Ascending aorta (tissue), 2 donors: ENCODE measurements at regions of chr14 and their contacts with region 1.

Region 1: GRCh38 chr14:55270832-55271565 is at the start of gene FBXO34:
- DNase-seq: peak; percentile 95 to 100
- H3K4me3 ChIP-seq: peak within 1 kb of the TSS; percentile 89 to 90
- H3K27ac ChIP-seq: peak within 1 kb of the TSS; percentile 80 to 90
- H3K4me1 ChIP-seq: peaks cover 0 to 20% of the 10 kb centered on the region in 2 donors
- H3K27me3 ChIP-seq: no peaks in the 10 kb centered on the region
- CTCF ChIP-seq: peak; percentile 99
- total RNA-seq, gene FBXO34: 18.0 TPM

Region 2: GRCh38 chr14:55191203-55192053 is 79.6 kb before region 1 on chr14 and contains the start of gene DLGAP5:
- intact Hi-C with region 1: loop called (anchors 5 kb)
- DNase-seq: peak; percentile 83 to 96
- H3K4me3 ChIP-seq: peak within 1 kb of the TSS; percentile 51 to 74
- H3K27ac ChIP-seq: peak within 1 kb of the TSS; percentile 17 to 71
- H3K4me1 ChIP-seq: peaks cover 0 to 7% of the 10 kb centered on the region in 2 donors
- H3K27me3 ChIP-seq: no peaks in the 10 kb centered on the region
- CTCF ChIP-seq: no peak
- total RNA-seq, gene DLGAP5: not detected

Region 3: GRCh38 chr14:55354500-55354899 is 83.5 kb after region 1 on chr14:
- intact Hi-C with region 1: loop called (anchors 1 kb)
- DNase-seq: peak in 1 of 2 donors; percentile 69
- H3K4me3 ChIP-seq: no peak overlapping the region
- H3K27ac ChIP-seq: no peak overlapping the region
- H3K4me1 ChIP-seq: no peaks in the 10 kb centered on the region
- H3K27me3 ChIP-seq: no peaks in the 10 kb centered on the region
- CTCF ChIP-seq: peak in 2 of 3 experiments; percentile 40 to 42

Region 4: DNA sequence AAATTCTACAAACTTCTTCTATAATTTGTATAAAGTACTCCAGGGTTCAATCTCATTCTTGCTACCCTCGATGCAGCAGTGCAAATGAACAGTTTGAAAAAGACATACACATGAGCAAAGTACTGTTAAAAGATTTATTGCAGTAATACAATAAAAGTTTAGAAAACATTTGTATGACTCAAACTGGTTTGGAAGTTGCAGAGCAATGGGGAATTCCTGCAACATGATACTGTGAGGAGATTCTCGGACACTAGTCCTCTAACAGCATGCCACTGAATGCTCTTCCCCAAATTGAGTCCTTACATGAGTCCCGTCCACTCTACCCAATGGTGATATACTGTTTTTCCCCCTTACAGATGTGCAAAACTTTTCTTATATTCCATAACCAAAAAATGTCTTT is 95.3 kb after region 1 on chr14:
- intact Hi-C with region 1: no loop called
- DNase-seq: no peak
- H3K4me3 ChIP-seq: no peak overlapping the region
- H3K27ac ChIP-seq: no peak overlapping the region
- H3K4me1 ChIP-seq: no peaks in the 10 kb centered on the region
- H3K27me3 ChIP-seq: no peaks in the 10 kb centered on the region
- CTCF ChIP-seq: no peak

Region 5: GRCh38 chr14:55411426-55412389 is 140.7 kb after region 1 on chr14 and contains the start of gene ATG14:
- intact Hi-C with region 1: loop called (anchors 2 kb)
- DNase-seq: peak; percentile 48 to 92
- H3K4me3 ChIP-seq: peak within 1 kb of the TSS; percentile 78 to 99
- H3K27ac ChIP-seq: peak within 1 kb of the TSS; percentile 82 to 97
- H3K4me1 ChIP-seq: peaks cover 0 to 22% of the 10 kb centered on the region in 2 donors
- H3K27me3 ChIP-seq: no peaks in the 10 kb centered on the region
- CTCF ChIP-seq: no peak
- total RNA-seq, gene ATG14: 8.4 TPM

Region 6: GRCh38 chr14:55430024-55430690 is 159.2 kb after region 1 on chr14:
- intact Hi-C with region 1: loop called (anchors 2 kb)
- DNase-seq: peak in 1 of 2 donors; percentile 68
- H3K4me3 ChIP-seq: no peak overlapping the region
- H3K27ac ChIP-seq: no peak overlapping the region
- H3K4me1 ChIP-seq: no peaks in the 10 kb centered on the region
- H3K27me3 ChIP-seq: no peaks in the 10 kb centered on the region
- CTCF ChIP-seq: peak; percentile 25 to 56 (median 29)

Region 7: DNA sequence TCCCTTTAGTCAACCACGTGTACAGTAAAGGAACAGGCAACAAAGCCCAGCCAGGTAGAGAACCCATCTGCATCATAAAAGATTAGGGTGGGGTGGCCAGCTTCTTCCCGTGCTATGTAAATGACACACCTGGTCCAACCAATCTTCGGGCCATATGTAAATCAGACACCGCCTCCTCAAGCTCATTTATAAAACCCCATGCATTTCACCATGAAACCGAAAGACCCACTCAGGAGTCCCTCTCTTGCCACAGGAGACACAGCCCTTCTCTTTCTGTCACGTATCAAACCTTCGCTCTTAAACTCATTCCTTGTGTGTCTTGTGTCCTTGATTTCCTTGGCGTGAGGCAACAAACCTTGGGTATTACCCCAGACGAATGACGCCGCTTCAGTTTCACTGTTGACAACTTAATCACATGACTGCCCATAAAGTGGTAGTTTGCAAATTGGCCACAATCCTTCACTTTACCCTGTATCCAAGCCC is 229.3 kb after region 1 on chr14:
- intact Hi-C with region 1: no loop called
- DNase-seq: no peak
- H3K4me3 ChIP-seq: no peak overlapping the region
- H3K27ac ChIP-seq: no peak overlapping the region
- H3K4me1 ChIP-seq: no peaks in the 10 kb centered on the region
- H3K27me3 ChIP-seq: no peaks in the 10 kb centered on the region
- CTCF ChIP-seq: no peak

Region 8: GRCh38 chr14:55579724-55580469 is 308.9 kb after region 1 on chr14 and contains the start of gene KTN1:
- intact Hi-C with region 1: loop called (anchors 10 kb)
- DNase-seq: peak; percentile 24 to 86
- H3K4me3 ChIP-seq: peak within 1 kb of the TSS; percentile 87 to 89
- H3K27ac ChIP-seq: peak within 1 kb of the TSS; percentile 97
- H3K4me1 ChIP-seq: peaks cover 3 to 22% of the 10 kb centered on the region in 2 donors
- H3K27me3 ChIP-seq: no peaks in the 10 kb centered on the region
- CTCF ChIP-seq: no peak
- total RNA-seq, gene KTN1: 36.3 TPM